A673 (cell line): ENCODE measurements at regions of chr19 and their contacts with region 1.

Region 1: DNA sequence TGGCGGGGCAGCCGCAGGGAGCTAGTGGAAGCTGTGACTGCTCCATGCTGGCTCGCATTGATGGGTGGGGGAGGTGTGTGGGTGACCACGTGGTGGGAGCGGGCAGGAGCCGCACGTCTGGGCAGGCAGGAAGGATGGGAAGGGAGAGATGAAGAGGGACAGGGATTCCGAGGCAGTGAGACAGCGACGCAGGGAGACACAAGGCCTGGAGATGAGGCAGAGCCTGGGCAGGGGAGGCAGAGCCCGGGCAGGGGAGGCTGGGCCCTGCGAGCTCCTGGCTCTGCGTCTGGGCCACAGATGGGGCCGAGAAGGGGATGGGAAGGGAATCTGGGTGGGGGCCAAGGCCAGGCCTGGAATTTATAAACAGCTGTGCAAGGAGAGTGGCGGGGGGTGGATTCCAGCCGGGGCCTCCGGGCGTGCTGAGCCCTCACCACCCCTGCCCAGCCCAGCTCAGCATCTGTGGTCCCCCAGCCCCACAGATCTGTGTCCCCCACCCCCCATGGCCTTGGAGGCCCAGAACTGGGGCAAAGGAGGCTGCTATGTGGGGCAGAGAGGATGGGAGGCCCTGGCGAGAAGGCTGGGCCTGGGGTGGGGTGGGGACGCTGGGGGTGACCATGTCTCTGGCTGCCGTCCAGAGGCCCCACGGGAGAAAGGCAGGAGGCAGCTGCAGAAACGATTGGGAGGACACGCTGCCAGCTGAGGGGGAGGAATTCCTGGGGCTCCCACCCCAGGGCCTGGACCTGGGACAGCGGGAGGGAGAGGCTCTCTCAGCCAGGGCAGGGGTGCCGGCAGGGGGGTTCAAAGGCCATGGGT is 6.0 kb downstream of the EHD2 start:
- DNase-seq: peak; percentile 30
- H3K4me3 ChIP-seq: no peak overlapping the region
- H3K27ac ChIP-seq: peak overlapping the region; percentile 23
- H3K4me1 ChIP-seq: peaks cover 16% of the 10 kb centered on the region
- H3K27me3 ChIP-seq: no peaks in the 10 kb centered on the region
- CTCF ChIP-seq: no peak

Region 2: GRCh38 chr19:47348819-47349795 is 370.1 kb before region 1 on chr19 and contains the start of gene DHX34:
- CTCF ChIA-PET with region 1: no interaction called
- POLR2A ChIA-PET with region 1: interaction called, 10 read pairs
- intact Hi-C with region 1: no loop called
- DNase-seq: peak; percentile 99
- H3K4me3 ChIP-seq: peak within 1 kb of the TSS; percentile 67
- H3K27ac ChIP-seq: peak within 1 kb of the TSS; percentile 76
- H3K4me1 ChIP-seq: peaks cover 8% of the 10 kb centered on the region
- H3K27me3 ChIP-seq: no peaks in the 10 kb centered on the region
- CTCF ChIP-seq: peak; percentile 99
- total RNA-seq, gene DHX34: 24.5 and 29.6 TPM in 2 replicates

Region 3: GRCh38 chr19:49378512-49378911 is 1659.3 kb after region 1 on chr19:
- CTCF ChIA-PET with region 1: no interaction called
- POLR2A ChIA-PET with region 1: interaction called, 11 read pairs
- intact Hi-C with region 1: no loop called
- DNase-seq: no peak
- H3K4me3 ChIP-seq: no peak overlapping the region
- H3K27ac ChIP-seq: no peak overlapping the region
- H3K4me1 ChIP-seq: no peaks in the 10 kb centered on the region
- H3K27me3 ChIP-seq: no peaks in the 10 kb centered on the region
- CTCF ChIP-seq: no peak